ENCODE measurements at regions of chr11 and their contacts with region 1.

Region 1: GRCh38 chr11:126716456-126717083 is 284.0 kb downstream of the KIRREL3 start:
- DNase-seq: peak in 1 of 3 donors; percentile 59
- ATAC-seq: peak; percentile 70 to 82 (median 76)
- H3K4me3 ChIP-seq: no peak overlapping the region
- H3K27ac ChIP-seq: no peak overlapping the region
- H3K4me1 ChIP-seq: no peaks in the 10 kb centered on the region
- H3K27me3 ChIP-seq: no peaks in the 10 kb centered on the region
- CTCF ChIP-seq: peak; percentile 47 to 62 (median 56)
- POLR2A ChIP-seq: no peak

Region 2: GRCh38 chr11:126607374-126607773 is 109.2 kb before region 1 on chr11:
- intact Hi-C with region 1: loop called in 1 of 2 experiments (anchors 10 kb)
- DNase-seq: peak; percentile 69 to 72 (median 71)
- ATAC-seq: peak; percentile 89 to 97 (median 92)
- H3K4me3 ChIP-seq: no peak overlapping the region
- H3K27ac ChIP-seq: no peak overlapping the region
- H3K4me1 ChIP-seq: peaks cover 0 to 12% (median 3%) of the 10 kb centered on the region in 4 donors
- H3K27me3 ChIP-seq: no peaks in the 10 kb centered on the region
- CTCF ChIP-seq: peak; percentile 84 to 86 (median 84)
- POLR2A ChIP-seq: no peak

Region 3: DNA sequence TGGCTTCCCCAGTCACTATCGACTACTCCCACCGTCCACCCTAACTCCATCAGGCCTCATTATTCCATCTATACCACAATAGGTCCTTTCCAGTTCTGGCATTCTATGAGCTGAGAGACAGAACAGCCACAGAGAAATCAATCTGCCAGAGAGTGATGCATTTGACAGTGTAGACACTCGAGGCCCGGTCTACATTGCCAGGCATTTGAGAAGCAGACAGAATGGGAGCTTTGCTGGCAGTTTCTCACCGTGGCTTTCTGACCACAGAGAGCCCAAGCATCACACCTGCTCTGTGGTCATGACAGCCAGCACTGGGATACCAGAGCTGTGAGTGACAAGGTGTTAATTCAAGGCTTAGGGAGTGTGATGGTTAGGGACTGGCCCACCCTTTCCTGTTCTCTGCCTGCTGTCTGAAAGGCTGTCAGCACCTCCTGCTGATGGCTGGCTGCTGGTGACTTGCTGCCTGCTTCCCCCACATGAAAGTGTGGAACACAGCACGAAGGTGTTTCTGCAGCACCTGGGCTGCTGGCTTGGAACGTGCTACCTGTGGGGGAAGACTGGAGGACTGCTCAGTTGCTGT is 146.2 kb after region 1 on chr11:
- intact Hi-C with region 1: no loop called
- DNase-seq: no peak
- ATAC-seq: no peak
- H3K4me3 ChIP-seq: no peak overlapping the region
- H3K27ac ChIP-seq: no peak overlapping the region
- H3K4me1 ChIP-seq: no peaks in the 10 kb centered on the region
- H3K27me3 ChIP-seq: no peaks in the 10 kb centered on the region
- CTCF ChIP-seq: no peak
- POLR2A ChIP-seq: no peak

Measured in right lobe of liver (tissue), 6 donors.